ENCODE measurements at regions of chr7 and their contacts with region 1.

Region 1: GRCh38 chr7:3673524-3673923 is 372.5 kb downstream of the SDK1 start:
- DNase-seq: peak; percentile 81
- ATAC-seq: peak; percentile 74
- H3K4me3 Mint-ChIP-seq: no peak overlapping the region
- H3K27ac Mint-ChIP-seq: peak overlapping the region; percentile 66; the same call in 1 of the 2 replicates
- H3K4me1 Mint-ChIP-seq: peaks cover 10% of the 10 kb centered on the region
- H3K27me3 Mint-ChIP-seq: no peaks in the 10 kb centered on the region
- CTCF ChIP-seq: no peak

Region 2: GRCh38 chr7:3482147-3482964 is 191.2 kb before region 1 on chr7:
- CTCF ChIA-PET with region 1: interaction called, 20 read pairs
- POLR2A ChIA-PET with region 1: no interaction called
- DNase-seq: peak; percentile 64
- ATAC-seq: peak; percentile 97
- H3K4me3 Mint-ChIP-seq: no peak overlapping the region
- H3K27ac Mint-ChIP-seq: no peak overlapping the region
- H3K4me1 Mint-ChIP-seq: peaks cover 9% of the 10 kb centered on the region
- H3K27me3 Mint-ChIP-seq: no peaks in the 10 kb centered on the region
- CTCF ChIP-seq: peak; percentile 39; the same call in 1 of the 2 replicates

Region 3: GRCh38 chr7:3544202-3544601 is 129.3 kb before region 1 on chr7:
- CTCF ChIA-PET with region 1: interaction called, 13 read pairs
- POLR2A ChIA-PET with region 1: no interaction called
- DNase-seq: peak; percentile 57
- ATAC-seq: peak; percentile 94
- H3K4me3 Mint-ChIP-seq: no peak overlapping the region
- H3K27ac Mint-ChIP-seq: no peak overlapping the region
- H3K4me1 Mint-ChIP-seq: peaks cover 22% of the 10 kb centered on the region
- H3K27me3 Mint-ChIP-seq: no peaks in the 10 kb centered on the region
- CTCF ChIP-seq: no peak; the same call in 1 of the 2 replicates

Region 4: DNA sequence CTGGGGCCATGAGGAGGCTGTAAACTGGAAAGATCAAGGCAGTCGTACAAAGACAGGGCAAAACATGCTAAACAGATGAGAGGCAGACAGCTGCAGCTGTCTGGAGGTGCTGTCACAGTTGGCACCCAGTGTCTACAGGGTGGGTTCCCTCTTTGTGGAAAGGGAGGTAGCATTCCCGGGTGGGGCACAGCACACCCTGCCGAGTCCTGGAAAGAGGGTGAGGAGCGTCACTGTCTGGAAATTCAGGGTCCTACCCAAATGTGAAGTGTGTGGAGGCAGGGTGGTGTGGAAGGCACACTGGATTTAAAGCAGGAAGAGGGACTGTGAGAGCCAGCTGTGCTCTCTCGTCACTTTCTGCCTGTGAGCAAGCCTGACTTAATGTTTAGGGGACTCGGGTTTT is 16.3 kb before region 1 on chr7:
- CTCF ChIA-PET with region 1: interaction called, 10 read pairs
- POLR2A ChIA-PET with region 1: no interaction called
- DNase-seq: no peak
- ATAC-seq: no peak
- H3K4me3 Mint-ChIP-seq: no peak overlapping the region
- H3K27ac Mint-ChIP-seq: 0 out of 2 replicates have a peak overlapping the region, but pooled peaks have one; percentile 3
- H3K4me1 Mint-ChIP-seq: peaks cover 13% of the 10 kb centered on the region
- H3K27me3 Mint-ChIP-seq: no peaks in the 10 kb centered on the region
- CTCF ChIP-seq: no peak

Region 5: DNA sequence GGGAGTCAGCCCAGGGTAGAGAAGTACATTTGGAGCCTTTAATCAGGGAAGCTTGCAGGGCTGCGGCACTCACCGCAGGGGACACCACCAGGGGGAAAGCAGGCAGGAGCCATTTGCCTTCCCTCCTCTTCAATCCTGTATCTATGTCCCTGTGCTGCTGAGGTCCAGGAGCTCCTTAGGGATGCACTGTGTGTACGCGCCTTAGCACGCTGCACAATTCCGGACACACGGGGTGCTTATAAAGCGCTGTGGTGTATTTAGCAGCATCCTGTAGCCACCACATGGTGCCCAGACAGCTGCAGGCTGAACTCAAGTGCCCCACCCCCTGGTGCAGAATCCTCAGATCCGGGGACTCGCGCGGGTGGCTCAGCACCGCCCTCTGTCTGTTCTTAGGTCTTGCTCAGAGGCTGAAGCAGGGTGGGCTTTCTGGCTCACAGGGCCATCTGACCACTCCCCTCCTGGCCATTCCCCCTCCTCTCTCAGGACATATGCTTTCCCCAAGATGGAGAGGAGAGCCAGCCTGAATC is 48.9 kb after region 1 on chr7:
- CTCF ChIA-PET with region 1: no interaction called
- POLR2A ChIA-PET with region 1: no interaction called
- DNase-seq: peak; percentile 81
- ATAC-seq: peak; percentile 99
- H3K4me3 Mint-ChIP-seq: no peak overlapping the region
- H3K27ac Mint-ChIP-seq: peak overlapping the region; percentile 57; the same call in 1 of the 2 replicates
- H3K4me1 Mint-ChIP-seq: peaks cover 13% of the 10 kb centered on the region
- H3K27me3 Mint-ChIP-seq: no peaks in the 10 kb centered on the region
- CTCF ChIP-seq: 0 out of 2 replicates have a peak, but pooled peaks have one; percentile 16

Region 6: GRCh38 chr7:4204513-4205165 is 531.1 kb after region 1 on chr7:
- CTCF ChIA-PET with region 1: no interaction called
- POLR2A ChIA-PET with region 1: no interaction called
- DNase-seq: no peak
- ATAC-seq: 0 out of 2 replicates have a peak, but pooled peaks have one; percentile 30
- H3K4me3 Mint-ChIP-seq: no peak overlapping the region
- H3K27ac Mint-ChIP-seq: no peak overlapping the region
- H3K4me1 Mint-ChIP-seq: no peaks in the 10 kb centered on the region
- H3K27me3 Mint-ChIP-seq: no peaks in the 10 kb centered on the region
- CTCF ChIP-seq: no peak

Measured in WTC11 (cell line).